ENCODE measurements at regions of chr12 and their contacts with region 1.

Region 1: DNA sequence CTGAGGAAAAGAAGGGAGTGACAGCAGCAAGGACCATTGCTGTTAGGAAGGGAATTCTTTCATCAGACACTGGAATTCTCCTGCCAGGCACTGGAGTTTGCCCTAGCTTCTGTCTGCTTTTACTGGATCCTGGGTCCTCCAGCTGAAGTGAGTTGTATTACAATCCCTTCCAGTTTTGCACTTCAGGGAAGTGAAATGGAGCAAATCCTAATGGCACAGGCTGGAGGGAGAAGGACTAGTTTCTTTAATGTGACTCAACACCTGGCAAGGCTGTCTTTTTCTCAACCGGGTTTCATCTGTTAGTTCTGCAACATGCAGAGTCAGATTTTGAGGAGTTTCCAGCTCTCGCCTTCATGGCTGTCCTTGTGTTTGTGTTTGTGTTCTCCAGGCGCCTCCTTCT is 45.8 kb downstream of the ETV6 start:
- DNase-seq: no peak
- ATAC-seq: peak; percentile 58
- H3K4me3 ChIP-seq: no peak overlapping the region
- H3K27ac ChIP-seq: peak overlapping the region; percentile 51 to 56
- H3K4me1 ChIP-seq: peaks cover 6 to 9% of the 10 kb centered on the region in 2 donors
- H3K27me3 ChIP-seq: no peaks in the 10 kb centered on the region

Region 2: GRCh38 chr12:11661491-11662089 is 33.7 kb before region 1 on chr12:
- intact Hi-C with region 1: loop called in 1 of 2 experiments (anchors 5 kb)
- DNase-seq: no peak
- ATAC-seq: no peak
- H3K4me3 ChIP-seq: no peak overlapping the region
- H3K27ac ChIP-seq: peak overlapping the region in 1 of 2 donors; percentile 80
- H3K4me1 ChIP-seq: peaks cover 15 to 24% of the 10 kb centered on the region in 2 donors
- H3K27me3 ChIP-seq: no peaks in the 10 kb centered on the region

Region 3: DNA sequence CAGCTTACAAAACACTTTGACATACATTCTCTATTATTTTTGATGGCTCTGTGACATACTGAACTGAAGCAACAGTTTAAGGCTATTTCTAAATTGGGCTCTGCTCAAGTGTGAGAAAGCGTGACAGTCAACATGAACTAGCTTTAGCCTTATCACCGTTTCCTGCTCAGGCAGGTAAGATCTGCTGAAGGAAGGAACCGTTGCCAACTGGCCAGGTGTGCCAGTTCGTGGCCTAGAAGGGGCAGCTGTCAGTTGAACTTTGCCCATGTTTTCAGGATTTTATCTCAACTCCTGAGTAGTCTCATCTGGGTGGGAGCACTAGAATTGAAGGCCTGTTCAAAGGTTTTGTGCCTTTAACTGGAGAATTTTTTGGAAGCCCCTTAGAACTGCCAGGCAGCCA is 33.7 kb after region 1 on chr12:
- intact Hi-C with region 1: loop called in 1 of 2 experiments (anchors 1 kb)
- DNase-seq: no peak
- ATAC-seq: no peak
- H3K4me3 ChIP-seq: no peak overlapping the region
- H3K27ac ChIP-seq: peak overlapping the region in 1 of 2 donors; percentile 66
- H3K4me1 ChIP-seq: peaks cover 3 to 13% of the 10 kb centered on the region in 2 donors
- H3K27me3 ChIP-seq: no peaks in the 10 kb centered on the region